Posterior vena cava (tissue), 2 donors: ENCODE measurements at regions of chr9 and their contacts with region 1.

Region 1: GRCh38 chr9:138064547-138064946 is 187.0 kb downstream of the CACNA1B start:
- DNase-seq: peak; percentile 50

Region 2: DNA sequence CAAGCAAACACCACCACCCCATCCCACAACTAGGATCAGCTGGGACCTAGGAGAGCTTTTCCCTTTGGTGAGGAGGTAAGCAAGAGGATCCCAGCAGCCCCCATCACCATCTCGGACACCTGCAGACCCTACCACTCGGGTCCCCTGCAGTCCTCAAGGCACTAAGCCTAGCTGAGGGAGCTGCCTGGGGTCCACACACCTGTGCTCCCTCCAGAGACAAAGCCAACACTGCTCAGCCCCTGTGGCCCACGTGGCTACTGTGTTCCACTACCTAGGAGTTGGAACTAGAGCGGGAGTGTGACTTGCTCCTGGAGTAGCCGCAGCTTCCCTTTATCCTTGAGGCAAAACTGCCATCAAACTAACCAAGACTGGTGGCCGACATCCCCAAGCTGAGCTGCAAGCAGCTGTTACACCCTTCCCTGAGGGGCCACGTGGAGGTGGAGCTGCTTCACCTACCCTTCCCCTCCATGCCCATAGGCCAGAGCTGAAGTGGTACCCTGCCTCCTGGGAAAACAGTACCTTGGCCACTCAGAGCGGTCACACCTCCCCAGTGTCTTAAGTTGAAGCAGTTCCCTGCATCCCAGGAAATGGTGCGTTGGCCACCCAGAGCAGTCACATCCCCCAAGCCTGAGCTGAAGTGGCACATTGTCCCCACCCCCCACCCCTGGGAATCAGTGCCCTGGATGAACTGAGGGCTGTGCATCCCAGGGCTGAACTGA is 18.5 kb after region 1 on chr9:
- intact Hi-C with region 1: loop called in 1 of 2 experiments (anchors 2 kb)
- DNase-seq: peak; percentile 32

Region 3: DNA sequence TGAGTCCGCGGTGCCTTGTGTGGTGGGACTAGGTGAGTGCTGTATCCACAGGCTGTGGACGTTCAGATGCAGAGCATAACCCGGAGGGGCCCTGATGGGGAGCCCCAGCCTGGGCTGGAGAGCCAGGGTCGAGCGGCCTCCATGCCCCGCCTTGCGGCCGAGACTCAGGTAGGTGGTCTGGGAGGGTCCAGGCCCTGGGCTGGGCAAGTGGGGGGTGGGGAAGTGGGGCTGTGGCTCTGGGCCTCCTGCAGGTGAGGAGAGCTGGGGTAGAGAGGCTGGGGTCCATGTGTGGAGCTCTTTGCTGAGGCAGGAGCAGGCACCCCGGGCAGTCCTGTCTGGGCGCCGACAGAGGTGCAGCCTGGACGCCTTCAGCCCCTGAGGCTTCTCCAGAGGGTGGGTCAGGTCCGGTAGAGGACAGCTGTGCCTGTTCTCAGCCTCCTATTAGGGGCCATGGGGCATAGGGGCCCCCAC is 54.1 kb after region 1 on chr9:
- intact Hi-C with region 1: no loop called
- DNase-seq: peak; percentile 79